ENCODE measurements at regions of chr13 and their contacts with region 1.

Region 1: DNA sequence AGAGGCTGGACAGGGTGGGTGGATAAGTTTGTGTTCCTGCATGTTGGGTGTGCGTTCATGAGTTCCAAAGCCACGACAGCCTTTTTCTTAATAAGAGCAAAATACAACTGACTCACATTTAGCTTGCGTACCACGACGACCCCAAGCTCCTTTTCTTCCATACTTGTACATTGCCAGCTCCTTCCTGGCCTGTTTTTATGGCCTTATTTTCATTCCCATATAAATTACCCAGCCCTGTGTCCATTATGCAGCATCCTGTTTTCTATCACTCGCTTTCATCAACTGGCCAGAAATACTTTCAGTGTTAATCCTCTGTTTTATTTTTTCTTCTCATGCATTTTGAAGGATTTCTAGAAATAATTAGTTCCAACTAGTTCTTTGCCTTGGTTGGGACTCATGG is 499.1 kb downstream of the FOXO1 start:
- DNase-seq: no peak
- ATAC-seq: no peak
- H3K4me3 ChIP-seq: no peak overlapping the region
- H3K27ac ChIP-seq: no peak overlapping the region
- H3K4me1 ChIP-seq: peaks cover 0 to 14% (median 0%) of the 10 kb centered on the region in 12 donors
- H3K27me3 ChIP-seq: no peaks in the 10 kb centered on the region
- CTCF ChIP-seq: no peak
- POLR2A ChIP-seq: no peak

Region 2: GRCh38 chr13:40096357-40096901 is 70.9 kb before region 1 on chr13:
- intact Hi-C with region 1: no loop called
- DNase-seq: no peak
- ATAC-seq: no peak
- H3K4me3 ChIP-seq: no peak overlapping the region
- H3K27ac ChIP-seq: no peak overlapping the region
- H3K4me1 ChIP-seq: no peaks in the 10 kb centered on the region
- H3K27me3 ChIP-seq: no peaks in the 10 kb centered on the region
- CTCF ChIP-seq: no peak
- POLR2A ChIP-seq: no peak

Region 3: GRCh38 chr13:40126306-40127085 is 40.8 kb before region 1 on chr13:
- intact Hi-C with region 1: loop called in 1 of 10 experiments (anchors 2 kb)
- DNase-seq: no peak
- ATAC-seq: no peak
- H3K4me3 ChIP-seq: no peak overlapping the region
- H3K27ac ChIP-seq: no peak overlapping the region
- H3K4me1 ChIP-seq: peaks cover 0 to 7% (median 0%) of the 10 kb centered on the region in 12 donors
- H3K27me3 ChIP-seq: no peaks in the 10 kb centered on the region
- CTCF ChIP-seq: no peak
- POLR2A ChIP-seq: no peak